Psoas muscle (tissue), 8 donors: ENCODE measurements at regions of chr1 and their contacts with region 1.

Region 1: GRCh38 chr1:110548381-110548780 is 29.4 kb upstream of the KCNA10 start:
- DNase-seq: no peak
- ATAC-seq: no peak
- H3K4me3 ChIP-seq: no peak overlapping the region
- H3K27ac ChIP-seq: no peak overlapping the region
- H3K4me1 ChIP-seq: no peaks in the 10 kb centered on the region
- H3K27me3 ChIP-seq: peaks cover 0 to 12% (median 1%) of the 10 kb centered on the region in 3 donors
- CTCF ChIP-seq: peak; percentile 21

Region 2: GRCh38 chr1:110524311-110525251 is 23.8 kb before region 1 on chr1:
- intact Hi-C with region 1: no loop called
- DNase-seq: no peak
- ATAC-seq: peak in 1 of 4 donors; percentile 46
- H3K4me3 ChIP-seq: no peak overlapping the region
- H3K27ac ChIP-seq: no peak overlapping the region
- H3K4me1 ChIP-seq: no peaks in the 10 kb centered on the region
- H3K27me3 ChIP-seq: peaks cover 0 to 30% (median 4%) of the 10 kb centered on the region in 3 donors
- CTCF ChIP-seq: peak; percentile 52

Region 3: GRCh38 chr1:110594456-110595352 is 46.3 kb after region 1 on chr1:
- intact Hi-C with region 1: loop called in 1 of 2 experiments (anchors 5 kb)
- DNase-seq: no peak
- ATAC-seq: no peak
- H3K4me3 ChIP-seq: no peak overlapping the region
- H3K27ac ChIP-seq: no peak overlapping the region
- H3K4me1 ChIP-seq: no peaks in the 10 kb centered on the region
- H3K27me3 ChIP-seq: peaks cover 0 to 9% (median 0%) of the 10 kb centered on the region in 3 donors
- CTCF ChIP-seq: no peak

Region 4: DNA sequence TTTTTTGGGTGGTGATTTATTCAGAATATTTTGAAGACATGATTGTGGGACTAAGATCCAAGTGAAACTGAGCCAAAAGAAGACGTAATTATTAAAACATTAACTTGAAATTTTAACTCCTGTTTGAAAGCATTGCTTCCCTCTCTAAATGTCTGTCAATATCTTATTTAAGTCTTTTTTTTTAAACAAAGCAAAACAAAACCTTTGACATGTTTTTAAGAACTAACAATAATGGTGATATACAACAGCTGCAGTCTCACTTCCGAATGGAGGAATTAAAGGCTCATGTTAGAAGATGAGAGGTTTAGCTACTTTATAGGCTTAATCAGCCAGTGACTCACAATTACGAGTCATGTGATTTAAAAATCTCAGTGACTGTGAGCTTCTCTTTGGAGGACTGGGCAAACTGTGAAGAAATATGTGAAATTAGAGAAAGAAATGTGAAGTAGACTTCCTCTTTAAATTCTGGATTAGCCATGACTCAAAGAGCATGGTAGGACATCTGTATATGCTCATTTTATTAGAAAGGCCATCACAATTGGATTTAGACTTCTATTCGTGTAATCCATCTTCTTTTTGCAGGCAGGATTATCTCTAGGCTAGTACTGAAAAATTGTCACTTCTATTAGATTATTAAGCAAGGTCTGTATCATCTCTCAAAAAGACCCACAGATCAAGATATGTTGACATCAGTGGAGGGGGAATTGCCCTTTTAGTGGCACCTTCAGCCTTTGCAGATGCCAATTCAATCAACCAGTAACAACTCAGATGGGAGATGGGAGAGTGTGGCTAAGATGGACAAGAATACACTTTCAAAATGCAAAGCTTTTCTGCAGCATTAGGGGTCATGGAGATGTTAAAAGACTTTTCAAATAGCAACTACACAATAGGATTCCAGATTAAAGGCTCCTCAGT is 97.7 kb after region 1 on chr1:
- intact Hi-C with region 1: no loop called
- DNase-seq: no peak
- ATAC-seq: peak in 1 of 4 donors; percentile 40
- H3K4me3 ChIP-seq: no peak overlapping the region
- H3K27ac ChIP-seq: no peak overlapping the region
- H3K4me1 ChIP-seq: no peaks in the 10 kb centered on the region
- H3K27me3 ChIP-seq: no peaks in the 10 kb centered on the region
- CTCF ChIP-seq: no peak